ENCODE measurements at regions of chr10 and their contacts with region 1.

Region 1: DNA sequence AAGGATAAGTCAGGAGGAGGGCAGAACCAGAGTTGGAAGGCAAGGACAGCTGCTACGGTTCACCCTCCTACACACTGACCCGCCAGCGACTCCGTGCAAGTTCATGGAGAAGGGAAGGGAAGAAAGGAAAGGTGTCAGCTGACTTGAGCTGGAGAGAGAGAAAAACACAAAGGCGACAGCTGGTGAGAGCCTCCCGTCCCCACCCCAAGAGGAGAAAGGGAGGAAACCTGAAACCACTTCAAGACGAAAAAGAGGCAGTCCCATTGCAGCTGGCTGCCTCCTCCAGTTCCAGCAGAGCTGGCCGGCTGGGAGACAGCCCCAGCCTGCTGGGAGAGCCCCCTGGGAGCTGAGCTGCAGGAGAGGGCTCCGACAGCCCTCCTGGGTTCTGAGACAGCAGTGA is 75.2 kb downstream of the PARD3 start:
- DNase-seq: peak; percentile 73
- ATAC-seq: peak; percentile 89
- H3K4me3 Mint-ChIP-seq: peak overlapping the region; percentile 63
- H3K27ac Mint-ChIP-seq: peak overlapping the region; percentile 99
- H3K4me1 Mint-ChIP-seq: peaks cover 66% of the 10 kb centered on the region
- H3K27me3 Mint-ChIP-seq: no peaks in the 10 kb centered on the region
- CTCF ChIP-seq: no peak

Region 2: GRCh38 chr10:34808801-34809745 is 69.2 kb after region 1 on chr10:
- CTCF ChIA-PET with region 1: interaction called, 10 read pairs
- POLR2A ChIA-PET with region 1: interaction called, 11 read pairs
- DNase-seq: peak; percentile 55
- ATAC-seq: peak; percentile 72
- H3K4me3 Mint-ChIP-seq: peak overlapping the region; percentile 47
- H3K27ac Mint-ChIP-seq: peak overlapping the region; percentile 89
- H3K4me1 Mint-ChIP-seq: peaks cover 63% of the 10 kb centered on the region
- H3K27me3 Mint-ChIP-seq: no peaks in the 10 kb centered on the region
- CTCF ChIP-seq: no peak

Measured in WTC11 (cell line).